A549 (cell line): ENCODE measurements at regions of chr6 and their contacts with region 1.

Region 1: DNA sequence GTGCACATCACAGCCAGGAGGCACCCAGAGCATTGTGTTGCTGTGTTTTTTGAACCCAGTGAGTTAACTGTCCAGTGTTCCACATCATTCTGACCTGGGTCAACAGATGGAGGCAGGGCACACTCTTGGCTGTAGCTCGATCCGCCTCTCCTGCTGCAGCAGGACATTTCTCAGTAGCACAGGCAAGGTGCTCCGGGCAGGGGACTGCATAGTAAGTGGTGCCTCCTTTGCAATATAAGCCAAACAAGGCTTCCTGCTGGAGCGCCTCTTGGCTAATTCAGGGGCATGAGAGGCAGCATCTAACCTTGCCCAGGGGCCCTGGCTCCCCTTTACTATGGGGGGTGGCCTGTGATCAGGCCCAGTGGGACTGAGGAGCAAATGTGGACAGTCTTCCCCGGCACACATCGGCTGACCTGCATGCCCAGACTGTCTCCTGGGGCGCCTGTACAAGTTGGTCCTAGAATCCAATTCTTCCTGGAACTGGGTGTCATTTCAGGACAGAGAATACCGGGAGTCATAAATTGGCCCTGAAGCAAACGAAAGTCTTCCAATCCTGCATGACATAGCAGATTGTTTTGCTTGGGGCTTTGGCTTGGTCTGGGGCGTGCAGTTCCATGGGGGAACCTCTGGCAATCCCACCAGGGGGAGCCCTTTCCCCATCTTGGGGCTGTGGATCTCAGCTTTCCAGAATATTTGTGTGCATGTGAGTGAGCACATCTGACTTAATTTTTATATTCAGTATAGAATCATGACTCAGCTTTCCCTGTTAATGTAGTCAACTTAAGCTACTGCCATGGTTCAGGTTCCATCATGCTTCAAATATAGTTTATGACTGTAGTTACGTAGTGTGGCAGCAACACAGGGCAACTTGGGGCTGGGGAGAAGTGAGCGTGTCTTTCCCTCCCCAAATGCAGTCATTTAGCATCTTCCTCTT is 56.0 kb upstream of the DDR1 start:
- DNase-seq: peak; percentile 70 to 84
- ATAC-seq: peak; percentile 91 to 95
- H3K4me3 ChIP-seq: no peak overlapping the region
- H3K27ac ChIP-seq: peak overlapping the region; percentile 91 to 95
- H3K4me1 ChIP-seq: peaks cover 27% of the 10 kb centered on the region
- CTCF ChIP-seq: peak; percentile 91
- EP300 ChIP-seq: no peak
- POLR2A ChIP-seq: no peak
- RAD21 ChIP-seq: peak; percentile 92 to 95

Region 2: GRCh38 chr6:30769088-30769852 is 59.0 kb before region 1 on chr6:
- CTCF ChIA-PET with region 1: interaction called, 10 read pairs
- POLR2A ChIA-PET with region 1: no interaction called
- DNase-seq: peak; percentile 93 to 94
- ATAC-seq: peak; percentile 91 to 95
- H3K4me3 ChIP-seq: peak overlapping the region; percentile 3; the same call in 1 of the 3 replicates
- H3K27ac ChIP-seq: peak overlapping the region; percentile 89 to 97
- H3K4me1 ChIP-seq: peaks cover 70% of the 10 kb centered on the region
- CTCF ChIP-seq: no peak
- EP300 ChIP-seq: peak; percentile 68 to 81; a peak in 3 of 5 replicates
- POLR2A ChIP-seq: no peak
- RAD21 ChIP-seq: peak; percentile 13 to 34; a peak in 2 of 5 replicates

Region 3: GRCh38 chr6:30844091-30844535 is 15.8 kb after region 1 on chr6:
- CTCF ChIA-PET with region 1: interaction called, 17 read pairs
- POLR2A ChIA-PET with region 1: no interaction called
- DNase-seq: peak in 1 of 2 experiments; percentile 33
- ATAC-seq: peak; percentile 43 to 90; a peak in 4 of 6 replicates
- H3K4me3 ChIP-seq: no peak overlapping the region
- H3K27ac ChIP-seq: peak overlapping the region; percentile 39 to 55; a peak in 3 of 6 replicates
- H3K4me1 ChIP-seq: peaks cover 31% of the 10 kb centered on the region
- CTCF ChIP-seq: no peak
- EP300 ChIP-seq: no peak
- POLR2A ChIP-seq: no peak
- RAD21 ChIP-seq: no peak

Region 4: GRCh38 chr6:30883685-30884520 is 55.6 kb after region 1 on chr6 and contains the start of gene DDR1:
- CTCF ChIA-PET with region 1: interaction called, 62 read pairs
- POLR2A ChIA-PET with region 1: interaction called, 4 read pairs
- DNase-seq: peak; percentile 49 to 58
- ATAC-seq: peak; percentile 37 to 40
- H3K4me3 ChIP-seq: peak within 1 kb of the TSS; percentile 98
- H3K27ac ChIP-seq: peak within 1 kb of the TSS; percentile 99
- H3K4me1 ChIP-seq: peaks cover 40% of the 10 kb centered on the region
- CTCF ChIP-seq: no peak
- EP300 ChIP-seq: no peak
- POLR2A ChIP-seq: 0 out of 2 replicates have a peak, but pooled peaks have one; percentile 14
- RAD21 ChIP-seq: no peak
- polyA plus RNA-seq, gene DDR1: 19.8 and 25.8 TPM in 2 replicates

Region 5: DNA sequence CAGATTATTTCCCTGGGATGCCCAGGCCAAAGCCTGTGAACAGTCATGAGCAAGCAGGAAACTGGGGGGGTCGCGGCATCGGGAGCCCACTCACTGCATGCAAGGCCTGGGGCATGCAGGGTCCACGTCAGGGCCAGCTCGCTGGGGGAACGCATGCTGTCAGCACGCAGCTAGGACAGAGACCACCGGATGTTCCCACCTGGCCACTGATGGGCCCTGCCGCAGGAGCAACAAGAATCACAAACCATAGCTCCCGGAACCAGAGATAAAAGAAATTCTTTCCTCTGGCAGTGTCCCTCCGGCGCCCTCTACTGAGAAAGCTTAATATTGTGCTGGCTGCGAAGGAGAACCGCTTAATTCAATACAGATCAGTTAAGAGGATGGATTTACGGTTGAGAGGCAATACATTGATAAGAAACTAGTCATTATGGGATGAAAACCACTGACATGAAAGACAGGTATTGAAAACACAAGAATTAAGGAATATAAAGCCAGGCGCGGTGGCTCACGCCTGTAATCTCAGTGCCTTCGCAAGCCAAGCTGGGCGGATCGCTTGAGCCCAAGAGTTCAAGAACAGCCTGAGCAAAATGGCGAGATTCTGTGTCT is 251.5 kb after region 1 on chr6:
- CTCF ChIA-PET with region 1: interaction called, 36 read pairs
- POLR2A ChIA-PET with region 1: no interaction called
- DNase-seq: peak; percentile 53 to 55
- ATAC-seq: peak; percentile 81 to 91
- H3K4me3 ChIP-seq: no peak overlapping the region
- H3K27ac ChIP-seq: peak overlapping the region in 1 of 2 experiments; percentile 84; a peak in 3 of 6 replicates
- H3K4me1 ChIP-seq: no peaks in the 10 kb centered on the region
- CTCF ChIP-seq: peak; percentile 72
- EP300 ChIP-seq: no peak
- POLR2A ChIP-seq: no peak
- RAD21 ChIP-seq: peak; percentile 70 to 71